ENCODE measurements at regions of chr20 and their contacts with region 1.

Region 1: DNA sequence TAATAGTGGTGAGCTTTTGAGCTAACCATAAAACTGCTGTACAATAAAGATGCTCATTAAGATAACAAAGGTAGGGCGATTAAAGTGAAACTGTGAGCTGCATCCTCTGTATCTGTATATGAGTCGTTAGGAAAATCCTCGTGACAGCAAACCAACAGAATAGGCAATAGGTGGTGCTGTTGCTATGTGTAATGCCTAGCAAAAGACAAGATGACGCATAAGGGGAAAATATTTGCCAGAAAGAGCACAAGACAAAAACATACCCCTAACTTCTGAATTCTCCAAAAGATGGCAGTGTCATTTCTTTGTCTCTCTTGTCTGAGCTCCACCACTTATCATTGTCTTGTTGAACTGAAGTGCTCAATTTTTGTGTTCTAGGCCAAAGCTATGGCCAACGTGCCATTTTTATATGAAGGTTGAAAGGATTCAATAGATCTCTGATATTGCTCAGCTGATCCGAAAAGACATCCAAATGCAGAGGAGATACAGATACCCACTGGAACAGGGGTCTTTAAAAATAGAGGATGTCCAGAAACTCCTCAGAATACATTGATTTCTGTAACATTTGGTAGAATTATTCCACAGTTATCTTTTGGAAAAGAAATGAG is 56.3 kb upstream of the ANKEF1 start:
- H3K4me3 ChIP-seq: no peak overlapping the region
- H3K27ac ChIP-seq: no peak overlapping the region
- H3K4me1 ChIP-seq: 0 out of 2 replicates have a peak, but pooled peaks cover 2% of the 10 kb centered on the region
- CTCF ChIP-seq: peak; percentile 82; the same call in 1 of the 2 replicates

Region 2: GRCh38 chr20:9616833-9617489 is 361.5 kb before region 1 on chr20:
- CTCF ChIA-PET with region 1: interaction called, 20 read pairs
- POLR2A ChIA-PET with region 1: no interaction called
- H3K4me3 ChIP-seq: no peak overlapping the region
- H3K27ac ChIP-seq: no peak overlapping the region
- H3K4me1 ChIP-seq: no peaks in the 10 kb centered on the region
- CTCF ChIP-seq: 0 out of 2 replicates have a peak, but pooled peaks have one; percentile 10

Region 3: DNA sequence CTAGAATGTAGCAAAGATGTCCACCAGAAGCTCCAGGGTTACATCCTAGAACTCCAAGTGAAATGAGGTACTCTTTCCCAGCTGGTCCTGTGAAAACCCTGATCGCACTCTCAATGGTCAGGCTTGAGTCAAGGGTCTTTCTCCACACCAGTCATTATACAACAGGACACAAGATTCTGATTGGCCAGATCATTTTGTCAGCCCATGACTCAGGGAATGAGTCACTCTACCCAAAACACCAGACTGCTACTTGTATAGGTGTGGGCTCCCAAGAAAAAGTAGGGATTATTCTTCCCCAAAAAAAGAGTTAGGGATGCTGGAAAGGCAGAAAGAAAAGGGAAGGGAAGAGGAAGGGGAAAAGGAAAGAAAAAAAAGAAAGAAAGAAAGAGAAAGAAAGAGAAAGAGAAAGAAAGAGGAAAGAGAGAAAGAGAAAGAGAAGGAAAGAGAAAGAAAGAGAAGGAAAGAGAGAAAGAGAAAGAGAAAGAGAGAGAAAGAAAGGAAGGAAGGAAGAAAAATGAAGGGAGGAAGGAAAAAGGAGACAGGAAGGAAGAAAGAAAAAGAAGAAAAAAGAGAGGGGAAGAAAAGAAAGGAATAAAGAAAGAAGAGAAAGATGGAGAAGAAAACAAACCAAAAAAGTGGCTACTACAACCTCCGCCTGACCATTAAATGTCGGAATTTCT is 86.8 kb after region 1 on chr20:
- CTCF ChIA-PET with region 1: no interaction called
- POLR2A ChIA-PET with region 1: no interaction called
- H3K4me3 ChIP-seq: no peak overlapping the region
- H3K27ac ChIP-seq: no peak overlapping the region
- H3K4me1 ChIP-seq: no peaks in the 10 kb centered on the region
- CTCF ChIP-seq: no peak

Region 4: GRCh38 chr20:10077081-10077471 is 98.6 kb after region 1 on chr20:
- CTCF ChIA-PET with region 1: interaction called, 12 read pairs
- POLR2A ChIA-PET with region 1: no interaction called
- H3K4me3 ChIP-seq: no peak overlapping the region
- H3K27ac ChIP-seq: no peak overlapping the region
- H3K4me1 ChIP-seq: no peaks in the 10 kb centered on the region
- CTCF ChIP-seq: no peak

Region 5: GRCh38 chr20:10427060-10427692 is 448.7 kb after region 1 on chr20:
- CTCF ChIA-PET with region 1: interaction called, 58 read pairs
- POLR2A ChIA-PET with region 1: no interaction called
- H3K4me3 ChIP-seq: no peak overlapping the region
- H3K27ac ChIP-seq: no peak overlapping the region
- H3K4me1 ChIP-seq: no peaks in the 10 kb centered on the region
- CTCF ChIP-seq: no peak